HepG2 (cell line): ENCODE measurements at regions of chr22 and their contacts with region 1.

Region 1: DNA sequence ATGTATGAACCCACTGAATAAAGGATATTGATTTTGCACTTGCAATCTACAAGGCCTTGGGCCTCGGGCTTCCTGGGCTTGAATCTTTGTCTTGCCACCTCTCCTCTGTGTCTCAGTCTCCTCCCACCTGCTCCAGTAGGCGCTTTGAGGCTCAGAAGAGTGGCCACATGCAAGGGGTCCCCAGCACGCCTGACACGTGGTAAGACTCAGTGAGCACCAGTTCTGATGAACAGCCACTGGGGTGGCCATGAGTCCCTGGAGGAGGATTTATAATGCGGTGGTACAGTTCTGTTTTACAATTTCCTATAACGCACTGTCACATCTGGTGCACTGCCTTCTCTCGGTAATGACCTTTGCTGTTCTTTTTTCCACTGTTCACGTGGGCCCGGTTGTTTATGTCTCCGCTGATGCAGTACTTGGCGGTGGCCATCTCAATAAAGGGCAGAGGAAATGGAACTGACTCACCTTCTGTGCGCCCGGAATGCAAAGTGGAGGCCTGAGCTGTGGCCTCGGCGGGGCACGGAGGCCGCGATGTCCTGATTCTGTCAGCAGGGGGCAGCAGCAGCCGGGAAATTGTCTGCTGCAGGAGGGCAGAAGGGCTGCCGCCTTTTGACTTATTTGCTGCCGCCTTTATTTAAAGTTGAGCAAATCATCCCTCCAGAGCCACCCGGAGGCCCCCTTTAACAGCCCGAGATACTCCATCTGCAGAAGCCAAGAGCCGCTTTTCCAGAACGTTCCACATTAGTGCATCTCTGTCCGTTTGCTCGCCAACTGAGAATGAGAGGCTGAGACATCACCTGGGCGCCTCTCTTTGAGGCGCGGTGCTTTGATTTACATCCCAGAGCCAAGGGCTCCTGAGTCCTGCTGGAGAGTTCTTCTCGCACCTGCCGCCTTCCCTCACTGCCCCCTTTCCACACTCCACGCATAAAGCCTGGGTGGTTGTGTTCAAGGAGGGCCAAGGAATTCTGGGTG is 6.0 kb upstream of the IFT27 start:
- DNase-seq: peak; percentile 40
- ATAC-seq: peak; percentile 92
- H3K4me3 ChIP-seq: no peak overlapping the region
- H3K27ac ChIP-seq: no peak overlapping the region
- H3K4me1 ChIP-seq: peaks cover under 1% of the 10 kb centered on the region; the same call in 1 of the 2 replicates
- H3K27me3 ChIP-seq: peaks cover 0 to 85% of the 10 kb centered on the region in 2 experiments; a peak in 4 of 5 replicates
- CTCF ChIP-seq: peak; percentile 87
- EP300 ChIP-seq: no peak
- POLR2A ChIP-seq: no peak
- RAD21 ChIP-seq: peak; percentile 73

Region 2: GRCh38 chr22:36734171-36735058 is 47.5 kb before region 1 on chr22:
- CTCF ChIA-PET with region 1: no interaction called
- POLR2A ChIA-PET with region 1: no interaction called
- in situ Hi-C with region 1: no loop called
- intact Hi-C with region 1: no loop called
- DNase-seq: no peak
- ATAC-seq: no peak
- H3K4me3 ChIP-seq: no peak overlapping the region
- H3K27ac ChIP-seq: no peak overlapping the region
- H3K4me1 ChIP-seq: no peaks in the 10 kb centered on the region
- H3K27me3 ChIP-seq: peaks cover 3% of the 10 kb centered on the region in 2 experiments; a peak in 3 of 5 replicates
- CTCF ChIP-seq: no peak
- EP300 ChIP-seq: no peak
- POLR2A ChIP-seq: no peak
- RAD21 ChIP-seq: no peak

Region 3: GRCh38 chr22:36901411-36902142 is 119.6 kb after region 1 on chr22:
- CTCF ChIA-PET with region 1: no interaction called
- POLR2A ChIA-PET with region 1: no interaction called
- in situ Hi-C with region 1: no loop called
- intact Hi-C with region 1: no loop called
- DNase-seq: no peak
- ATAC-seq: no peak
- H3K4me3 ChIP-seq: no peak overlapping the region
- H3K27ac ChIP-seq: no peak overlapping the region
- H3K4me1 ChIP-seq: no peaks in the 10 kb centered on the region
- H3K27me3 ChIP-seq: peaks cover 0 to 22% of the 10 kb centered on the region in 2 experiments; a peak in 2 of 5 replicates
- CTCF ChIP-seq: no peak
- EP300 ChIP-seq: no peak
- POLR2A ChIP-seq: no peak
- RAD21 ChIP-seq: no peak

Region 4: DNA sequence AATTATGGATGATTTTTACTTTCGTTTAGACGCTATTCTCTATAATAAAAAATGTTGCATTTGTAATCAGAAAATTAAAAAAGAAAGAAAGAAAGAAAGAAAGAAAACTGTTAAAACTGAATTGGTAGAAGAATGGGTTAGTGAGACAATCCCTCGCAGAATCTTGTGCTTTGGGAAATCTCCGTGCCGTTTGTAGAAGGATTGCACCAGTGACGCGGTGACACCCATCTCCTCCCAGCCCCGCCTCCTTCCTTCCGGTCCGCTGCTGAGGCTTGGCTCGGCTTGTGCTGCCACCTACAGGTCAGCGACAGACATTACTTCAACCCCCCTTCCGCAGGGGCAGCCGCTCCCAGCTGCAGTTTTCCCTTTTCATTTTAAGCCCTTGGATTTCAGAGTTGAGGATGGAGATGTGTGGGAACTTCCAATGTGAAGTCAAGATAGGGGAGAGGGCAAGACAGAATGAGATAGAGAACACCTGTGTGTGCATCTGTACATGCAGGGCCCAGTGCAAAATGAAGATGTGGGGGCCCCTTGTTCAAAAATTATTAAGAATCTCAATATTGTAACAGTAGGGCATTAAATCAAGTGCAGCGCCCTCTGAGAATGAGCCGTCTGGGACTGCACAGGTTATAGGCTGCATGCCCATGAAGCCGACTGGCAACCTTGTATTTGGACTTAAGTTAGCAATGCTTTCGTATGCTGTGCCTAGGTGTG is 196.2 kb after region 1 on chr22:
- CTCF ChIA-PET with region 1: no interaction called
- POLR2A ChIA-PET with region 1: no interaction called
- in situ Hi-C with region 1: no loop called
- intact Hi-C with region 1: loop called (anchors 5 kb)
- DNase-seq: peak; percentile 72
- ATAC-seq: peak; percentile 80
- H3K4me3 ChIP-seq: peak overlapping the region; percentile 38 to 65 (median 55); a peak in 5 of 6 replicates
- H3K27ac ChIP-seq: no peak overlapping the region
- H3K4me1 ChIP-seq: peaks cover 6% of the 10 kb centered on the region; the same call in 1 of the 2 replicates
- H3K27me3 ChIP-seq: peaks cover 0 to 7% of the 10 kb centered on the region in 2 experiments; a peak in 2 of 5 replicates
- CTCF ChIP-seq: peak; percentile 94
- EP300 ChIP-seq: no peak
- POLR2A ChIP-seq: no peak
- RAD21 ChIP-seq: peak; percentile 73